ENCODE measurements at regions of chr13 and their contacts with region 1.

Region 1: GRCh38 chr13:51125498-51126226 is 14.6 kb upstream of the C13orf42 start:
- DNase-seq: peak; percentile 67
- H3K4me3 Mint-ChIP-seq: no peak overlapping the region
- H3K27ac Mint-ChIP-seq: no peak overlapping the region
- H3K4me1 Mint-ChIP-seq: peaks cover 5% of the 10 kb centered on the region
- H3K27me3 Mint-ChIP-seq: peaks cover 8% of the 10 kb centered on the region

Region 2: GRCh38 chr13:51111997-51112396 is 13.7 kb before region 1 on chr13:
- CTCF ChIA-PET with region 1: interaction called, 10 read pairs
- intact Hi-C with region 1: no loop called
- DNase-seq: no peak
- H3K4me3 Mint-ChIP-seq: no peak overlapping the region
- H3K27ac Mint-ChIP-seq: no peak overlapping the region
- H3K4me1 Mint-ChIP-seq: no peaks in the 10 kb centered on the region
- H3K27me3 Mint-ChIP-seq: no peaks in the 10 kb centered on the region

Region 3: GRCh38 chr13:51222037-51222685 is 96.5 kb after region 1 on chr13 and contains the start of gene FAM124A:
- CTCF ChIA-PET with region 1: interaction called, 6 read pairs
- intact Hi-C with region 1: loop called (anchors 5 kb)
- DNase-seq: peak; percentile 49
- H3K4me3 Mint-ChIP-seq: peak within 1 kb of the TSS; percentile 73
- H3K27ac Mint-ChIP-seq: no peak within 1 kb of the TSS
- H3K4me1 Mint-ChIP-seq: no peaks in the 10 kb centered on the region
- H3K27me3 Mint-ChIP-seq: peaks cover 39% of the 10 kb centered on the region
- total RNA-seq, gene FAM124A: not detected

Measured in activated naive CD4-positive, alpha-beta T cell treated with anti-CD3 and anti-CD28 coated beads for 36 hours (primary cell).